ENCODE measurements at regions of chr15 and their contacts with region 1.

Region 1: DNA sequence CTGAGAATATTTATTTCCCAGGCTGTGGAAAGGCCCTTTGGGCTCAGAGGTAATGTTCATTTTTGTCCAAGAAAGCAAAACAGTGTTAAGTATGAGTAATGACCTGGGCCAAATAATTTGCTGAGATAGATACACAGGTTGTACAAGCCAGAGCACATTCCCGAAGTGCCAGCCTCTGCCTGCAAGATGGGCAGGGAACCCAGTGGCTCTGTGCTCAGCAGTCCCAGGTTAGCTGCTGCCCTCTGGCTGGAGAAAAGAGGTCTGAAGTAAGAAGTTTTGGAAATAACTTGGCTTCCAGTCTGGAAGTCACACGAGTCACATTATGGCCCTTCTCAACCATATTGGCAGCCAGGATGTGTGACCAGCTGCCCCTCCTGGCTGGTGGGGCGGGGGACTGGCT is 20.2 kb downstream of the MYZAP start:
- DNase-seq: peak; percentile 38 to 39
- H3K4me3 ChIP-seq: no peak overlapping the region
- H3K4me3 Mint-ChIP-seq: no peak overlapping the region
- H3K27ac Mint-ChIP-seq: no peak overlapping the region
- H3K4me1 ChIP-seq: no peaks in the 10 kb centered on the region
- H3K4me1 Mint-ChIP-seq: no peaks in the 10 kb centered on the region
- H3K27me3 ChIP-seq: no peaks in the 10 kb centered on the region
- H3K27me3 Mint-ChIP-seq: no peaks in the 10 kb centered on the region
- CTCF ChIP-seq: peak in 1 of 2 experiments; percentile 21

Region 2: DNA sequence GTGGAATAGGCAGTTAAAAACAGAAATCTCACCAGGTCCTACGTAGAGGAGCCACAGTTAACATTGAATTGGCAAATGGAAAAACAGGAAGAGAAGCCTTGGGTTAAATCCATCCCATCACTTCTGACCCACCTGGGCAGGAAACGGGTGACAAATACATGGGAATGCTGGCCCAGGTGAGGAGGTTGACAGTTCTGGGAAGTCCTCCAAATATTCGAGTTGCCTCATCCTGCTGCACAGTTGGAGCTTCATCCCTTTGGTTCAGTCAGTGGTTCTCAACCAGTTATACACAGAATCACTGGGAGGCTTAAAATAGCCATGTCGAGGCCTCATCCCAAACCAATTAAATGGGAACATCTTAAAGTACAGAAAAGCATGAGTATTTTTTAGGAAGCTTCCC is 15.0 kb before region 1 on chr15:
- CTCF ChIA-PET with region 1: interaction called, 3 read pairs
- POLR2A ChIA-PET with region 1: no interaction called
- intact Hi-C with region 1: loop called (anchors 2 kb)
- DNase-seq: no peak
- H3K4me3 ChIP-seq: no peak overlapping the region
- H3K4me3 Mint-ChIP-seq: no peak overlapping the region
- H3K27ac Mint-ChIP-seq: no peak overlapping the region
- H3K4me1 ChIP-seq: peaks cover 10% of the 10 kb centered on the region
- H3K4me1 Mint-ChIP-seq: peaks cover 29% of the 10 kb centered on the region
- H3K27me3 ChIP-seq: no peaks in the 10 kb centered on the region
- H3K27me3 Mint-ChIP-seq: no peaks in the 10 kb centered on the region
- CTCF ChIP-seq: no peak

Region 3: DNA sequence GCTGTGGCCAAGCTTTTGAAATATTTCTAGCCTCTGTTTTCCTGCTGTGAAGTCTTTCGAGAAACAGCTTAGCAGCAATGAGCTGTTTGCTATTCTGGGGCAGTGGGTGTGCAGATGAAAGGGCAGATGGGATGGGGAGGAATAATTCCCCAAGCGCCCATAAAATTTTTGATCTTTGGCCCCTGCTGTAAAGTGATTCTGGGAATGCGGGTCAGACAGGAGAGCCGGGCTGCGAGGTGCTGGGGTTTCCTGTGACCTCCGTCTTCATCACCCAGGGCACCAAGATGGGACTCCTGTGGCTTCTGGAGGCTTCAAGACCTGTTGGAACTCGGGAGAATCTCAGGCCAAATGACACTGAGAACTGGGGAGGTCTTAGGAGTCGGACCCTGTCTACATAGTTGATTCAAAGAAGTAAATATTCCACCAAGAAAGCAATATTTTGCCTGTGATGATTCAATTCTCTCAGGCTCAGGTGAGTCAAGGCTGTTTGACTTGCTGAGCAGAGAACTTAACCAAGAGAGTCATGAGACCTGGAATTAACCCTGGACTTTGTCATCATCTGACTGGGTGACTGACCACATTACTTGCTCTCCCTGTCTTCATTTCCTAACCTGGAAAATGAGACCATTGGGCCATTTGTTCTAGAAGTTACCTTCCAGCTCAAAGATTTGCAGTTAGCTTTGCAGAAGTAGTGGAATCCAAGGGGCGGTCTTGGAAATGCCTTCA is 180.9 kb after region 1 on chr15:
- CTCF ChIA-PET with region 1: no interaction called
- POLR2A ChIA-PET with region 1: no interaction called
- intact Hi-C with region 1: no loop called
- DNase-seq: peak; percentile 27 to 55
- H3K4me3 ChIP-seq: no peak overlapping the region
- H3K4me3 Mint-ChIP-seq: no peak overlapping the region
- H3K27ac Mint-ChIP-seq: no peak overlapping the region
- H3K4me1 ChIP-seq: peaks cover 16% of the 10 kb centered on the region
- H3K4me1 Mint-ChIP-seq: peaks cover 12% of the 10 kb centered on the region
- H3K27me3 ChIP-seq: no peaks in the 10 kb centered on the region; the same call in 1 of the 2 replicates
- H3K27me3 Mint-ChIP-seq: peaks cover 4% of the 10 kb centered on the region
- CTCF ChIP-seq: no peak

Region 4: GRCh38 chr15:58521293-58521991 is 909.5 kb after region 1 on chr15:
- CTCF ChIA-PET with region 1: no interaction called
- POLR2A ChIA-PET with region 1: no interaction called
- intact Hi-C with region 1: no loop called
- DNase-seq: peak; percentile 76 to 84
- H3K4me3 ChIP-seq: no peak overlapping the region
- H3K4me3 Mint-ChIP-seq: no peak overlapping the region
- H3K27ac Mint-ChIP-seq: peak overlapping the region; percentile 78
- H3K4me1 ChIP-seq: peaks cover 31% of the 10 kb centered on the region
- H3K4me1 Mint-ChIP-seq: peaks cover 48% of the 10 kb centered on the region
- H3K27me3 ChIP-seq: no peaks in the 10 kb centered on the region
- H3K27me3 Mint-ChIP-seq: no peaks in the 10 kb centered on the region
- CTCF ChIP-seq: no peak